HEK293T (cell line): ENCODE measurements at regions of chr21 and their contacts with region 1.

Region 1: DNA sequence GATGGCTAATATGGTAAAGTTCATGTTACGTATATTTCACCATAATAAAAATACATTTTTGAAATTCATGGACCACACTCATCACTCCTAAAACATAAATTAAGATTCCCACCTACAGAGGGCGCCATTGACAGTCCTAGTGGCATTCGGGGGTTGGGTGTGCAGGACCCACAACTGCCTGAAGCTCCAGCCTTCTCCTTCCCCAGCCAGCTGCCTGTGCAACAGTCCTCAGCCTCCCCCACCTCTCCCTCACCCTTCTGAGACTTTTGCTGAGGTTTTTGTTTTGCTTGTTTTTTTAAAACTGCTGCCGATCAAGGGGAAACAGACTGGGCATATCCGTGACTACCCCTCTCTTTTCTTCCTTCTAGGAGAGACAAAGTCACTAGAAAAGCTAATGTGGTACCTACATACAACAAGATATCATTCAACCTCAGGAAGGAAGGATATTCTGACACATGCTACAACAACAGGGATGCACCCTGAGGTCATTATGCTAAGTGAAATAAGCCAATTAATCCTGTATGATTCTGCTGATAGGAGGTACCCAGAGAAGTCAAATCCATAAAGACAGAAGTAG is 9.2 kb upstream of the EVA1C start:
- DNase-seq: peak; percentile 82

Region 2: GRCh38 chr21:32426592-32427051 is 23.3 kb after region 1 on chr21:
- CTCF ChIA-PET with region 1: no interaction called
- POLR2A ChIA-PET with region 1: no interaction called
- DNase-seq: no peak

Region 3: GRCh38 chr21:32599526-32599925 is 196.2 kb after region 1 on chr21:
- CTCF ChIA-PET with region 1: interaction called, 27 read pairs
- POLR2A ChIA-PET with region 1: no interaction called
- DNase-seq: no peak